ENCODE measurements at regions of chr10 and their contacts with region 1.

Region 1: GRCh38 chr10:93816123-93816747 is 58.5 kb downstream of the LGI1 start:
- DNase-seq: peak; percentile 55
- H3K4me3 Mint-ChIP-seq: no peak overlapping the region
- H3K27ac Mint-ChIP-seq: no peak overlapping the region
- H3K4me1 Mint-ChIP-seq: peaks cover 13% of the 10 kb centered on the region
- H3K27me3 Mint-ChIP-seq: peaks cover 77% of the 10 kb centered on the region
- CTCF ChIP-seq: peak; percentile 52

Region 2: GRCh38 chr10:93622942-93623341 is 193.3 kb before region 1 on chr10:
- CTCF ChIA-PET with region 1: no interaction called
- intact Hi-C with region 1: no loop called
- DNase-seq: no peak
- H3K4me3 Mint-ChIP-seq: no peak overlapping the region
- H3K27ac Mint-ChIP-seq: no peak overlapping the region
- H3K4me1 Mint-ChIP-seq: no peaks in the 10 kb centered on the region
- H3K27me3 Mint-ChIP-seq: peaks cover 13% of the 10 kb centered on the region
- CTCF ChIP-seq: no peak

Region 3: GRCh38 chr10:93702211-93703001 is 113.8 kb before region 1 on chr10 and contains the start of gene FRA10AC1:
- CTCF ChIA-PET with region 1: interaction called, 3 read pairs
- intact Hi-C with region 1: loop called (anchors 2 kb)
- DNase-seq: peak; percentile 89
- H3K4me3 Mint-ChIP-seq: no peak within 1 kb of the TSS
- H3K27ac Mint-ChIP-seq: no peak within 1 kb of the TSS
- H3K4me1 Mint-ChIP-seq: no peaks in the 10 kb centered on the region
- H3K27me3 Mint-ChIP-seq: peaks cover 6% of the 10 kb centered on the region
- CTCF ChIP-seq: no peak
- total RNA-seq, gene FRA10AC1: 6.5 and 7.6 TPM in 2 replicates

Region 4: DNA sequence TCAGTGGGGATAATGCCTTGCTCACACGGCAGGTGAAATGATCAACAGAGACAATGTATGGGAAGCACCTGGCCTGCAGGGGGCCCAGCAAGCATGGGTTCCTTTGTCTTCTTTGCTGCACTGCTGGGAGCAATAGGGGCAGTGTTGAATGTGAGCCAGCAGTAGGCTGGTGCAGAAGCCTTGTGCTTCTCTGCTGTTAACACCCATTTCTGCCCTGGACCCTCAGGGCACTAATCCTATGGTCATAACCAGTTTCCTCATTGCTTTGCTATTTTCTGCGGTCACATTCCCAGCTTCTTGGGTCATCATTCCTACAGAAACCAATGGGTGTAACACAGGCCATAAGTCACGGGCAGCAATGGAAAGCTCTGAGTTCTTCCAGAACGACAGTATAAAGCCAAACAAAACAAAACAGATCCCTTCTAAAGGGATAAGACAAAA is 69.4 kb before region 1 on chr10:
- CTCF ChIA-PET with region 1: no interaction called
- intact Hi-C with region 1: loop called (anchors 5 kb)
- DNase-seq: peak; percentile 64
- H3K4me3 Mint-ChIP-seq: no peak overlapping the region
- H3K27ac Mint-ChIP-seq: no peak overlapping the region
- H3K4me1 Mint-ChIP-seq: peaks cover 11% of the 10 kb centered on the region
- H3K27me3 Mint-ChIP-seq: no peaks in the 10 kb centered on the region
- CTCF ChIP-seq: peak; percentile 50

Region 5: GRCh38 chr10:93859049-93859655 is 42.9 kb after region 1 on chr10:
- CTCF ChIA-PET with region 1: interaction called, 8 read pairs
- intact Hi-C with region 1: loop called (anchors 5 kb)
- DNase-seq: no peak
- H3K4me3 Mint-ChIP-seq: no peak overlapping the region
- H3K27ac Mint-ChIP-seq: no peak overlapping the region
- H3K4me1 Mint-ChIP-seq: peaks cover 9% of the 10 kb centered on the region
- H3K27me3 Mint-ChIP-seq: peaks cover 34% of the 10 kb centered on the region
- CTCF ChIP-seq: no peak

Region 6: DNA sequence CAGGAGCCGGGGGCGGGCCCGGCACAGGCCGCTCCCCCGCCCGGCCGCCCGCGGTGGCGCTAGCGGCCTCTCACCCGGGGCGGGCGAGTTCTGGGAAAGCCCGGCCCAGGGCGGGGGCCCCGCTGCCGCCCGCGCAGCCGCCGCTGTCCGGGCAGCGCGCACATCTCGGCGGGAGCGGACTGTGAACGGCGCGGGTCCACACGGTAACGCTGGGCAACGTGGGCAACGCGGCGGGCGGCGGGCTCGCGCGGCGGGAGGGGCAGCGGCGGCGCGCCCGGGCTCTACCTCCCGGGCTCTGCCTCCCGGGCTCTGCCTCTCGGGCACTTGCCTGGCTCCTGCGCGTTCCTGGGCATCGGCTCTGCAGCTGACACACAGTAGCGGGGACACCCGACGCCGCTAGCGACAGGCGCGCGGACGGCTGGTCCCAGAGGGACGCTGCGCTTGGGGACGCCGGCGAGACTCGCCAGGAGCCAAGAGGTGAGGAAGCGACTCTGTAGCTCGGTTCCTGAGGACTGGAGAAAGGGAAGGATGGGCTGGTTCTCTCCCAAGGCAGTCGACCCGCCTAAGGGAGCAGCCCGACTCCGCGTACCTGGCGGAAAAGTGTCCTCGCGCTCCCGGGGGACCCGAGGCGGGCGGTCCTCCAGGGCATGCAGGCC is 177.7 kb after region 1 on chr10 and contains the start of gene PLCE1:
- CTCF ChIA-PET with region 1: no interaction called
- intact Hi-C with region 1: no loop called
- DNase-seq: peak; percentile 59
- H3K4me3 Mint-ChIP-seq: peak within 1 kb of the TSS; percentile 81
- H3K27ac Mint-ChIP-seq: peak within 1 kb of the TSS; percentile 5
- H3K4me1 Mint-ChIP-seq: peaks cover 37% of the 10 kb centered on the region
- H3K27me3 Mint-ChIP-seq: peaks cover 47% of the 10 kb centered on the region
- CTCF ChIP-seq: no peak
- total RNA-seq, gene PLCE1: 1.8 and 3.2 TPM in 2 replicates

Region 7: GRCh38 chr10:94320285-94320914 is 504.2 kb after region 1 on chr10:
- CTCF ChIA-PET with region 1: interaction called, 6 read pairs
- intact Hi-C with region 1: loop called (anchors 2 kb)
- DNase-seq: peak; percentile 59
- H3K4me3 Mint-ChIP-seq: no peak overlapping the region
- H3K27ac Mint-ChIP-seq: no peak overlapping the region
- H3K4me1 Mint-ChIP-seq: no peaks in the 10 kb centered on the region
- H3K27me3 Mint-ChIP-seq: no peaks in the 10 kb centered on the region
- CTCF ChIP-seq: peak; percentile 52

Region 8: GRCh38 chr10:94439275-94439861 is 623.1 kb after region 1 on chr10:
- CTCF ChIA-PET with region 1: interaction called, 3 read pairs
- intact Hi-C with region 1: loop called (anchors 10 kb)
- DNase-seq: peak; percentile 12
- H3K4me3 Mint-ChIP-seq: no peak overlapping the region
- H3K27ac Mint-ChIP-seq: no peak overlapping the region
- H3K4me1 Mint-ChIP-seq: peaks cover 6% of the 10 kb centered on the region
- H3K27me3 Mint-ChIP-seq: no peaks in the 10 kb centered on the region
- CTCF ChIP-seq: no peak

Measured in Calu3 (cell line).